ENCODE measurements at regions of chr19 and their contacts with region 1.

Region 1: GRCh38 chr19:23914402-23915301 is at the start of gene ZNF726:
- DNase-seq: peak; percentile 74 to 96 (median 90)
- H3K4me3 ChIP-seq: peak within 1 kb of the TSS; percentile 48 to 91 (median 76)
- H3K27ac ChIP-seq: peak within 1 kb of the TSS in 12 of 59 donors; percentile 19 to 78 (median 53)
- H3K27me3 ChIP-seq: no peaks in the 10 kb centered on the region
- CTCF ChIP-seq: peak in 1 of 56 donors; percentile 24
- total RNA-seq, gene ZNF726: 2.1 to 8.3 (median 4.2) TPM

Region 2: DNA sequence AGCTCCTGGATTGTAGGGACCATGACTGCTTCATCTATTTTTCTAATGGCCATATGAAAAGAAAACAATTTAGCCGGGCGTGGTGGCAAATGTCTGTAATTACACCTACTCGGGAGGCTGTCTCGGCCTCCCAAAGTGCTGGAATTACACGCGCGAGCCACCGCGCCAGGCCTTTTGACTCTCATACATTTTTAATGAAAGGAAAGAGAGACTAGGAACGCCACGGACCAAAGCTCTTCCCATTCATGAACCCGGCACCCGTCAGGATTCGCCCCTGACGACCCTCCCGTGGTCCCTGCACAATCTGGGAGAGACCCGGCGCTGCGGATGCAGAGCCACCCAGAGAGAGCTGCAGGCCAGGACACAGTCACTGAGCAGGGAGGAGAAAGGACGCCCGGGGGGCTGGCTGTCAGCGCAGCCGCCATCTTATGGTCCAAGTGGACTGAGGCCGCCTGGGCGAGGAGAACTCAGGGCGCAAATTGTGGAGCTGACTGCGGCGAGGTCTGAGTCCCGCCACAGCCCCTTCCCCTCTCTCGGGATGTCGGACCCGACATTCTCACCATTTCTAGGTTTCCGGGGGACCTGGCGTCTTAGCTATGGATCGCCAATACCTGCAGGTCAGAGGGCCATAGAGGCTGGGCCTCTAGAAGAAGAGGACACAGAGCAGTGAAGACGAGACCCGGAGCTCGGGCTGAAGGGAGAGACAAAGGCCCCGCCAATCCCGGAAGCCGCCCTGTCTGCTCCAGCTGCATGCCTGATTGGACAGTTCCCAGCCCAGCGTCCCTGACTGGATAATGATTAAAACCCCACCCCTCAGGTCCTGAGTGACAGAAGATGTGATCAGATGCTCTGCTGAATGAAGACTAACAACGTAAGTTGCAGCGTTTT is 156.2 kb before region 1 on chr19 and contains the start of gene ZNF681:
- intact Hi-C with region 1: loop called in 1 of 2 experiments (anchors 10 kb)
- DNase-seq: peak; percentile 72 to 97 (median 92)
- H3K4me3 ChIP-seq: peak within 1 kb of the TSS; percentile 57 to 92 (median 78)
- H3K27ac ChIP-seq: peak within 1 kb of the TSS in 52 of 59 donors; percentile 7 to 89 (median 64)
- H3K27me3 ChIP-seq: no peaks in the 10 kb centered on the region
- CTCF ChIP-seq: peak in 4 of 56 donors; percentile 2 to 11 (median 5)
- total RNA-seq, gene ZNF681: 1.8 to 10.5 (median 4.8) TPM

Region 3: GRCh38 chr19:24033301-24033962 is 118.8 kb after region 1 on chr19:
- intact Hi-C with region 1: loop called in 1 of 2 experiments (anchors 10 kb)
- DNase-seq: peak; percentile 78 to 93 (median 90)
- H3K4me3 ChIP-seq: peak overlapping the region; percentile 49 to 98 (median 88)
- H3K27ac ChIP-seq: peak overlapping the region; percentile 64 to 97 (median 93)
- H3K27me3 ChIP-seq: no peaks in the 10 kb centered on the region
- CTCF ChIP-seq: peak in 20 of 56 donors; percentile 5 to 46 (median 22)

Region 4: GRCh38 chr19:24159707-24160106 is 245.1 kb after region 1 on chr19:
- intact Hi-C with region 1: no loop called
- DNase-seq: no peak
- H3K4me3 ChIP-seq: no peak overlapping the region
- H3K27ac ChIP-seq: no peak overlapping the region
- H3K27me3 ChIP-seq: no peaks in the 10 kb centered on the region
- CTCF ChIP-seq: peak in 18 of 56 donors; percentile 5 to 40 (median 18)